ENCODE measurements at regions of chr11 and their contacts with region 1.

Region 1: DNA sequence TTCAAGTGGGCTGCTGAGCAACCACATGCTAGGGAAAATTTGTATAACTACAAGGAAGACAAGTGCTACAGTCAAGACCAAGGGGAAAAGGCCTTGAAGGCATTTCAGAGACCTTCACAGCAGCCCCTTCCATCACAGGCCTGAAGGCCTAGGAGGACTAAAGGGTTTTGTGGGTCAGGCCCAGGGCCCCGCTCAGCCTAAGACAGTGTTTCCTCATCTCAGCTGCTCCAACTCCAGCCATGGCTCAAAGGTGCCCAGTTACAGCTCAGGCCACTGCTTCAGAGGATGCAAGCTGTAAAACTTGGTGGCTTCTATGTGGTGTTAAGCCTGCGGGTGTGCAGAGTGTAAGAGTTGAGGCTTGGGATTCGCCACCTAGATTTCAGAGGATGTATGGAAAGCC is 260.5 kb downstream of the NXPE2 start:
- DNase-seq: no peak
- ATAC-seq: no peak
- H3K4me3 ChIP-seq: no peak overlapping the region
- H3K27ac ChIP-seq: no peak overlapping the region
- H3K4me1 ChIP-seq: no peaks in the 10 kb centered on the region
- H3K27me3 ChIP-seq: no peaks in the 10 kb centered on the region
- CTCF ChIP-seq: no peak
- POLR2A ChIP-seq: no peak
- RAD21 ChIP-seq: no peak

Region 2: DNA sequence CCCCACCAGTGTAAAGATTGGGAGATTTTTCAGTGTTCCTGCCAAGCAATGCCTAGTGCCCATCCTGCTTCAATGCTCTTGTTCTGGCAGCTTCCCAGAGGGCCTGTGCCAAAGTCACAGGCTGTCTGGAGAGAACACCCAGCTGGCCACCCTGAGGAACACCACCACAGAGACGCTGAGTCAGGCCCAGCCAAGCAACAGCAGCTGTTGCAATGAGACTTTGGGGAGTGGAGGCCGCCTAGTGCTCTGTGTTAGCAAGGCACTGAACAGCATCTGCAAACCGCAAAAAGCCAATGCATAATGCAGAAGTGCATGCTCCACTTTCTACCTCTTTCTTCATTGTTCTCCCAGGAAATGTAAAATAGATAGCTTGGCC is 92.4 kb before region 1 on chr11:
- CTCF ChIA-PET with region 1: no interaction called
- POLR2A ChIA-PET with region 1: no interaction called
- dilution Hi-C with region 1: no loop called
- in situ Hi-C with region 1: no loop called
- intact Hi-C with region 1: no loop called
- DNase-seq: no peak
- ATAC-seq: no peak
- H3K4me3 ChIP-seq: no peak overlapping the region
- H3K27ac ChIP-seq: no peak overlapping the region
- H3K4me1 ChIP-seq: no peaks in the 10 kb centered on the region
- H3K27me3 ChIP-seq: no peaks in the 10 kb centered on the region
- CTCF ChIP-seq: no peak
- POLR2A ChIP-seq: no peak
- RAD21 ChIP-seq: no peak

Region 3: DNA sequence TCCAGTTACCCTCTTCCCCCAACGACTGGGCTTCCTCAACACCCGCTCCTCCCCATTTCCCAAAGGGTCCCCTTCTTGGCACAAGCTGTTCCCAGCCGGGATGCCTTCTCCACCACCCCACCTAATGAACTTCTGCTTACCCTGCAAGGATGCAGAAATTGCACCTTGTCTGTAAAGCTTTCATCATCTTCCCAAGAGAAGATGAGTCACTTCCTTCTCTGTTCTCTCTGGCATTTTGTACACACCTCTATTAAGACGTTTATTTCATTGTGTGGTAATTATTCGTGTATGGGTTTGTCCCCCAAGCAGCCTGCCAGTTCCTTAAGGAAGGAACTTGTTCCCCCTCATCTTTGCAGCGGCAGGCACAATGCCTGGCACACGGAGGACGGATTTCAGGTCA is 214.3 kb after region 1 on chr11:
- CTCF ChIA-PET with region 1: no interaction called
- POLR2A ChIA-PET with region 1: no interaction called
- dilution Hi-C with region 1: no loop called
- in situ Hi-C with region 1: no loop called
- intact Hi-C with region 1: no loop called
- DNase-seq: peak; percentile 33
- ATAC-seq: no peak
- H3K4me3 ChIP-seq: no peak overlapping the region
- H3K27ac ChIP-seq: no peak overlapping the region
- H3K4me1 ChIP-seq: no peaks in the 10 kb centered on the region; the same call in 1 of the 2 replicates
- H3K27me3 ChIP-seq: peaks cover 6% of the 10 kb centered on the region
- CTCF ChIP-seq: no peak
- POLR2A ChIP-seq: no peak
- RAD21 ChIP-seq: no peak

Region 4: DNA sequence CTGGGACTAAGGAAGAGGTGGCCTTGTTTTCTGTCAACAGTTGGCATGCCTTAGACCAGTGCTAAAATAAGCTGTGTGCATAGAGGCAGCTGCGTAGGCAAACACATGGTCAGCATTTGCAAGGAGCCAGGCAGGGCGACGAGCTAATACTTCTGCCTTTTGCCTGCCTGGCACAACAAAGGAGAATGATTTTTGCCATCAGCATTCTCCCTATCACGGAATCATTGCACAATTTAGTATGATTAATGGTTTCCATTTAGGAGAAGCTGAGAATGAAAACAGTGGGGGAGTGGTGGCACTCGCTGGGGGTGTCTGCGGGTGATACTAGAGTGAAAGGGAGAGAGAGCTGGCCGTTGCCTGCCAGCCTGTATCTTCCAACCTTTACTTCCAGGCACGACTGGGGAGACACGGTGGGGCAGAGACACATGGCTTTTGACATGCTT is 229.5 kb after region 1 on chr11:
- CTCF ChIA-PET with region 1: no interaction called
- POLR2A ChIA-PET with region 1: no interaction called
- dilution Hi-C with region 1: no loop called
- in situ Hi-C with region 1: no loop called
- intact Hi-C with region 1: loop called (anchors 10 kb)
- DNase-seq: no peak
- ATAC-seq: no peak; the same call in 1 of the 2 replicates
- H3K4me3 ChIP-seq: no peak overlapping the region
- H3K27ac ChIP-seq: no peak overlapping the region
- H3K4me1 ChIP-seq: peaks cover 2% of the 10 kb centered on the region; the same call in 1 of the 2 replicates
- H3K27me3 ChIP-seq: peaks cover 17% of the 10 kb centered on the region
- CTCF ChIP-seq: no peak
- POLR2A ChIP-seq: no peak
- RAD21 ChIP-seq: no peak

Region 5: GRCh38 chr11:115360186-115360824 is 421.5 kb after region 1 on chr11:
- CTCF ChIA-PET with region 1: no interaction called
- POLR2A ChIA-PET with region 1: no interaction called
- dilution Hi-C with region 1: no loop called
- in situ Hi-C with region 1: no loop called
- intact Hi-C with region 1: no loop called
- DNase-seq: peak; percentile 50
- ATAC-seq: peak; percentile 76
- H3K4me3 ChIP-seq: no peak overlapping the region
- H3K27ac ChIP-seq: no peak overlapping the region
- H3K4me1 ChIP-seq: peaks cover 5% of the 10 kb centered on the region
- H3K27me3 ChIP-seq: no peaks in the 10 kb centered on the region
- CTCF ChIP-seq: 0 out of 2 replicates have a peak, but pooled peaks have one; percentile 19
- POLR2A ChIP-seq: no peak
- RAD21 ChIP-seq: 0 out of 2 replicates have a peak, but pooled peaks have one; percentile 3

Region 6: DNA sequence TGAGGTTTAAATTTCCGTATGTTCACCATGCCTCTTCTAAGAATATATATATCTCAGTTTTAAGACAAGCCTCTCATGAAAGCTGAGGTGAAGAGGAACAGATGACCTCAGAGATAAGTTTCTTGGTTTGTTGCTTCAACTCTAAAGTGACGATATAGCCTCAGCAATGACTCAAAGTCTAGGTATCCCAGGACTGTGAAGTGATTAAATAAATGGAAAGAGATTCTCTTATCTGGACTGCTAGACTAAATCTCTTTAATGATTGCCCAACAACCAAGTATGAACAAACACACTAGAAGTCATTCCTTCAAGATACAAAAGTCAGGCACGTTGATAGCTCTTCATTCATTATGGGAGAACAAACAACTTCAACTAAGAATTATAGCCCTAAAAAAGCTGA is 550.1 kb after region 1 on chr11:
- CTCF ChIA-PET with region 1: no interaction called
- POLR2A ChIA-PET with region 1: no interaction called
- dilution Hi-C with region 1: no loop called
- in situ Hi-C with region 1: no loop called
- intact Hi-C with region 1: no loop called
- DNase-seq: peak; percentile 94
- ATAC-seq: peak; percentile 91
- H3K4me3 ChIP-seq: no peak overlapping the region
- H3K27ac ChIP-seq: no peak overlapping the region
- H3K4me1 ChIP-seq: peaks cover 7% of the 10 kb centered on the region
- H3K27me3 ChIP-seq: no peaks in the 10 kb centered on the region
- CTCF ChIP-seq: no peak
- POLR2A ChIP-seq: no peak
- RAD21 ChIP-seq: no peak

Measured in IMR-90 (cell line).